ENCODE measurements at regions of chr2 and their contacts with region 1.

Region 1: DNA sequence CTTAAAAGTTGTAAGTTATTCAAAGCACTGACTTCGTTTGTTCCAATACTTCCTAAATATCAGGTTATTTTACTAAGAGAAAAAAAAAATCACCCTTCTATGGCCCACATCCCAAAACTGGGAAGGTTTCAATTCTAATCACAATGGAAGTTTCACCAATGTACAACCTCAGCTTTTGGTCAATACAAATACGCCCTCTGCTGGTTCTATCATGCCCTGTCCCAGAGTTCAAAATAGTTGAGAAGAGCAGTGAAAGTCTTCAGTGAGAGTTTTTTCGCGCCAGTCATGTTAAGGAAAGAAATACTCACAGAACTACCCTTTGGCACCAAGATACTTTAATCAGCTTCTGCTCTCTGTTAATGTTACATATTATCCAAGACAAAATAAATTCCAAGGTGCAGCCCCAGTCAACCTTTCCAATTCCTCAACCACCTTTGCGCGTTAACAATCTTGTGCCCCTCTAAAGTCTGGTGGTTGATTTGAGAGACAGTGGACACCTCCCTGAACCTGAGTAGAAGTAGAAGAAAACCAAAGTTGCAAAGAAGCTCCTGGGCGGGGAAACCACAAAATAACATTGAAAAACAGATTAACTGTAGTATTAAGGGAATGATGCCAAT is 59.9 kb downstream of the SUMO1 start:
- DNase-seq: peak in 4 of 5 donors; percentile 54 to 89 (median 82)
- H3K4me3 ChIP-seq: no peak overlapping the region
- H3K27ac ChIP-seq: no peak overlapping the region
- H3K4me1 ChIP-seq: no peaks in the 10 kb centered on the region
- H3K27me3 ChIP-seq: no peaks in the 10 kb centered on the region
- CTCF ChIP-seq: peak; percentile 93

Region 2: GRCh38 chr2:201795607-201796477 is 382.6 kb before region 1 on chr2:
- intact Hi-C with region 1: loop called (anchors 5 kb)
- DNase-seq: peak in 4 of 5 donors; percentile 43 to 75 (median 48)
- H3K4me3 ChIP-seq: no peak overlapping the region
- H3K27ac ChIP-seq: no peak overlapping the region
- H3K4me1 ChIP-seq: no peaks in the 10 kb centered on the region
- H3K27me3 ChIP-seq: no peaks in the 10 kb centered on the region
- CTCF ChIP-seq: peak; percentile 63

Measured in kidney (tissue), 22 donors.